ENCODE measurements at regions of chr5 and their contacts with region 1.

Region 1: DNA sequence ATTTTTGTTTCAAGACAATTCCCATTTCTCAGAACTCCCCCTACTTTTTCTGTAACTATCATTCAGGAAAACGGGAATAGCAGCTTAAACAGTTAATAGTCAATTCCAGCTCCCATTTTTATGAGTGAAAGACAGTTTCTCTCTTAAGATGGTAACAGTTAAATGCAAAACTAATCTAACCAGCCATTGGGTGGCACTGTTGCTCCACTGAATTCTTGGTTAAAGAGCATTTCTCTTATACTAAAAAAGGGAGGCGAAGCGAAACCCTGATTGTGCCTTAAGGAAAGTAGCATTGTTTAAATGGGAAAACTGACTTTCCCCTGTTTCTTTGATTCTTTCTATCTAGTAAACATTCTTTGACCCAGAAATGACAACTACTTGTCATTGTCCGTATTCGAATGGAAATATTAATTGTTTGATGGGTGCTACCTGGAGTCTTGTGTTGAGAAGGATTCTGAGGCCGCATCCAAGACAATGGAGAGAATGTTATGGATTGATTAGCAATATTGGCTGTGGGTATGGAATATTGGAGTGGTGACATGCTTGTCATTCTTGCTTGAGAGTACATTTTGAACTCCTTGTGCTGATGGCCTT is 507.8 kb downstream of the MAT2B start:
- DNase-seq: peak; percentile 28
- CTCF ChIP-seq: peak; percentile 53

Region 2: GRCh38 chr5:164475339-164475977 is 462.3 kb after region 1 on chr5:
- in situ Hi-C with region 1: loop called (anchors 25 kb)
- DNase-seq: peak; percentile 3
- CTCF ChIP-seq: peak; percentile 16

Measured in GM13976 (cell line).